Right ventricle myocardium superior (tissue), 1 donor: ENCODE measurements at regions of chr9 and their contacts with region 1.

Region 1: GRCh38 chr9:129320575-129321263 is 142.7 kb upstream of the IER5L start:
- DNase-seq: peak; percentile 78
- ATAC-seq: peak; percentile 85

Region 2: DNA sequence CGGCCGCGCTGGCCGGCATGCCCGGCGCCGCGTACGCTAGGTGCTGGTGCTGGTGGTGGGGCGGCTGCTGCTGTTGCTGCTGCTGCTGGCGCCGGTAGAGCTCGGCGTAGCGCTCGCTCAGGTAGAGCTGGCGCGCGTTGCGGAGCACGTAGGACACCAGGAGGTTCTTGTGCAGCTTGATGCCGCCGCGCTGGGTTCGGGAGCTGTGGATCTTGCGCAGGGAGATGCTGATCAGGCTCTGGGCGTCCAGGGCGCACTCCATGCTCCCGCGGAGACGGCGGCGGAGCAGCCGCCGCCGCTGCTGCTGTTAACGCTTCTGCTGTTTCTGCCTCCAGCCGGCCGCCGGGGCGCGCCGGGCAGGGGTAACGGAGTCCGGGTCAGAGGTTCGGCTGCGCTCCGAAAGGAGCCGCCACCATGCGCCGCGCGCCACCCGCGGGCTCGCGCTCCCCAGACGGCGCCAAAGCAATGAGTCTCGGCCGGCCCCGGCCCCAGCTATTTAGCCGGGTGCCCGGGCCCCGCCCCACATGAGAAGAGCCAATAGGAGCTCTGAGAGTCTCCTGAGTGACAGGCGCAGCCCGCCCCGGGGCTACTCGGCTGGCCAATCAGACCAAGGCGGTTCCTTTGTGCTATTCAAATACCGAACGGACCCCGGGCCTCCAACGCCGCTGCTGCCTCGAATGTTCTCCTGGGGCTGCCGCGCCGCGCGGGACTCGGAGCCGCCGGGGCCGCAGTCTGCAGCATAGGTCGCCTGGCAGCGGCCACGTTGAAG is 142.7 kb before region 1 on chr9 and contains the start of gene IER5L:
- intact Hi-C with region 1: loop called (anchors 5 kb)
- DNase-seq: peak; percentile 97
- ATAC-seq: peak; percentile 83
- total RNA-seq, gene IER5L: 3.5 TPM

Region 3: DNA sequence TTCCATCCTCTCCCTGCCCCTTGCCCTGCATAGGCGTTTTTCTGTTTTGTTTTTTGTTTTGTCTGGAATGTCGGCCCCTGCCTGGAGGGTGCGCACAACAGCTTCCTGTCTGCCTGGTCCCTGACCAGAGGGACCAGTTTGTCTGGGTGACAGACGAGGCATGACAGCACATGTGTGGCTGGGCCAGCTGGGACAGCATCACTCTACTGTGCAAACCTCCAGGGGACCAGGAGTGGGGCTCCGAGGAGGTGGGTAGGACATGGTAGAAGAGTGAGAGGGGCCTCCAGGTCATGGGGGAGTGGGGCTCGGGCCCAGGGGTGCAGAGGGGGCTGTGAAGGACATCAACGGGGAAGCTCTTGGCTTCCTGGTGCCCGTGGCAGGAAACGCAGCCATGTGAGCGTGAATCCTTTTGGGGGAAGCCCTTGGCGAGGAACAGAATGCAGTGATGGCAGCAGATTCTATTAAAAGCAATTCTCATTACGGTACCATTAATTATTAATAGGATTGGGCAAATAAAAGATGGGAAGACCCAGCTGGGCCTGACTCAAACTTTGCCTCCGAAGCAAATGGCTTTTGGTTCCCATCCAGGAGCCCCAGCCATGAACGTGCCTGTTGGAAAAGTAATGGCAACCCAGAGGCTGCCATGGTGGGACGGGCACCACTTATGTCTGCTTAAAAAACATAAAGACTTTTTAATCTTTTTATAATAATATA is 41.7 kb after region 1 on chr9:
- intact Hi-C with region 1: no loop called
- DNase-seq: peak; percentile 13
- ATAC-seq: no peak

Region 4: DNA sequence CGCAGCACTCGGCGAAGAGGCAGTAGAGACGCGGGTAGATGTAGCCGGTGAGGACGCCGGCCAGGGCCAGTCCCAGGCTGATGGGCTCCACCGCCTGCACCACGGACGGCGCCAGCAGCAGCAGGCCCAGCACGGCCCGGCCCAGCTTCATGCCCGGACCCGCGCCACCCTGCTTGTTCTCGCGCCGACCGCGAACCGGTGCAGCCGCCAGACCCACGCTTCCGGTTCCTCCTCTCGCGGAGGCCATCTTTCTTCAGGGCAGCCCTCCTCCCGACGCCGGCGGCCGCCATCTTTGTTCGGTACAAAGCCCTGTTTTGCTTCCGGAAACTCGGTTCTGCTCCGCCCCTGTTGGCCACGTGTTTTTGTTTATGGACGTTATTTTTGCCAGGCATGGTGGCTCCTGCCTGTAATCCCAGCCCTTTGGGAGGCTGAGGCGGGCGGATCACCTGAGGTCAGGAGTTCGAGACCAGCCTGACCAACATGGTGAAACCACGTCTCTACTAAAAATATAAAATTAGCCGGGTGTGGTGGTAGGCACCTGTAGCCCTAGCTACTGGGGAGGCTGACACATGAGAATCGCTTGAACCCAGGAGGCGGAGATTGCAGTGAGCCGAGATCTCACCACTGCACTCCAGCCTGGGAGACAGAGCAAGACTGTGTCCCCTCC is 503.3 kb after region 1 on chr9 and contains the start of gene TOR1A:
- intact Hi-C with region 1: no loop called
- DNase-seq: peak; percentile 97
- ATAC-seq: peak; percentile 97
- total RNA-seq, gene TOR1A: 12.0 TPM